HepG2 (cell line): ENCODE measurements at regions of chr6 and their contacts with region 1.

Region 1: DNA sequence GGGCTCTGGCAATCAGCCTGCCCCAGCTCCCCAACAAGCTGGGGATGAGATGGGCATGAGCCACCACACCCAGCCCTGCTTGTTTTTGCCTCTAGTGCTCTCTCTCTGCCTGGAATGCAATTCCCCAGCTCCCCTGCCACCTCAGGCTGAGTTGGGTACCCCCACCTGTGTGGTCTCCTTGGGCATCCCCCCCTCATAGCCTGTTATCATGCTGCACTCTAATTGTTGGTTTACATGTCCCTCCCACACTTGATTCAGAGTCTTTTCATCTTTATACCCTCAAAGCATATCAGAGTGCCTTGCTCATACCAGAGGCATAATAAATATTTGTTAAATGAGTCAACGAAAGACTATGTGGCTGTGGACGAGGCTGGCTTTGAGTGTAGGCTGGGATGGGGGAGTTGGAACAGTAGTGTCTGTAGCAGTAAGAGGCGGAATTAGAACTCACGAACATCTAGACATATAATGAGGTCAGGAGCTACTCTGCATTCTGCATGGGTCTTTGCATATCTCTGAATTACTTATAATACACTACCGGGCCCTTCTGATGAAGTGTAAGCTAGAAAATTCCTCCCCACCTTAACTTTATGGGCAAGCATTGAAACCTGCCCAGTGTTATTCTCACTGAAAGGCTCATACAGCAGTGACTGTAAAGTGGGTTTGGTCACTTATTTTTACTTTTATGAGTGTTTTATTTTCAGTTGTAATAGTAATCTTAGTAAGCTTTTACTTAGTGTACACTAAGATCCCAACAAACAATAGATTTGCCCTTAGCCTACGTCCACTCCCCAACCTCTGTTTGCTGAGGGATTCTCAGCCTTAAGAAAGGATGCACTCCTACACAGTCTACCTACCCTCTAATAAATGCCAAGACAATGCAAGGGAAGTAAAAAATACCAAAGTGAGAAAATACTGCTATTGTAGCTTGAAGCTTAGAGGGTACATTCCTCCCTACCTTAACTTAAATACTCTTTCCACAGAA is 58.7 kb downstream of the EDN1 start:
- DNase-seq: peak; percentile 98
- ATAC-seq: peak; percentile 95
- H3K4me3 ChIP-seq: no peak overlapping the region
- H3K27ac ChIP-seq: peak overlapping the region; percentile 15
- H3K4me1 ChIP-seq: peaks cover 43% of the 10 kb centered on the region
- H3K27me3 ChIP-seq: no peaks in the 10 kb centered on the region
- CTCF ChIP-seq: no peak
- EP300 ChIP-seq: peak; percentile 17 to 97; a peak in 2 of 4 replicates
- POLR2A ChIP-seq: no peak
- RAD21 ChIP-seq: no peak

Region 2: GRCh38 chr6:12363651-12364381 is 15.0 kb after region 1 on chr6:
- CTCF ChIA-PET with region 1: no interaction called
- POLR2A ChIA-PET with region 1: interaction called, 14 read pairs
- in situ Hi-C with region 1: no loop called
- intact Hi-C with region 1: no loop called
- DNase-seq: peak; percentile 52
- ATAC-seq: peak; percentile 74
- H3K4me3 ChIP-seq: 0 out of 6 replicates have a peak overlapping the region, but pooled peaks of 1 of the 3 experiments have one; percentile 18
- H3K27ac ChIP-seq: no peak overlapping the region
- H3K4me1 ChIP-seq: peaks cover 36% of the 10 kb centered on the region
- H3K27me3 ChIP-seq: no peaks in the 10 kb centered on the region
- CTCF ChIP-seq: no peak
- EP300 ChIP-seq: 0 out of 4 replicates have a peak, but pooled peaks of 1 of the 2 experiments have one; percentile 19
- POLR2A ChIP-seq: no peak
- RAD21 ChIP-seq: no peak